IMR-90 (cell line): ENCODE measurements at regions of chr5 and their contacts with region 1.

Region 1: DNA sequence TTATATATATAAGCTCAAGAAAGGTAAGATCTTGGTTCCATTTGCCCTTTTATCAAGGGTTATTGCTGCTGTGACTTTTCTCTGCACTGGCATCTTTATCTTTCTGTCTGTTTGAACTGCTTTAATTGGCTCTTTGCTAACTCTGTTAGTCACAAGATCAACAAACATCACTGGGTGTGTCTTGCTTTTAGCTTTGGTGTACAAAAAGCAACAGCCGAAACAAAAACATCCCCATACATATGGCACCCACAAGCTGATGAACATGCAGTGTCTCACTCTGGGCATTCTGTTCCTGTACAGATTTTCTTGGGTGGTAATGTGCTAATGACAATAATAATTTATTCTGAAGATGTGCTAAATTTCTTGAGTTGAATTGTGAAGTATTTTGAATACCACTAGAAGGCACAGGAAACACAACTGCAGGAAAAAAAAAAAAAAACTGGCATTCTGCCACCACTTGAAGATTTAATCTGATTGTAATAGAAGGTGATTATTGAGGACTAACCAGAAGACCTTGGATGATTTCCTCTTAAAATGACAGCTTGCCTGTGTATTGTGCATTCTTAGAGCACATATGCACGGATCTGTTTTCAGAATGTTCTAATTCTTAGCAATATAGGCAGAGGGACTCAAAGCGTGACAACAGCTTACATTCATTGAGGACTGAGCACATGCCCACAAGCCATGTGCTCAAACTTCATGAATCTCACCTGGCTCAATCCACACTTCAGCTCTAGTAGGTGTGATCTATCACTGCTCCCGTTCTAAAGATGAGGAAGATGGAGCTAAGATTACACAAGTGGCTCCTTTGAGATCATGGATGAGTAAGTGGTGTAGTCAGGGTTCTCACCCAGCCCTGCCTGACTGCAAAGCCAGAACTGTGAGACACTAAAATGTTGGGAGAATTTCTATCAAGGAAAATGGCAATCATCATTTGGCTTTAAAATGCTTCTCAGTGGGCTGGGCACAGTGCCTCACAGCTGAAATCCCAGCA is 96.4 kb downstream of the EBF1 start:
- DNase-seq: peak; percentile 37
- ATAC-seq: no peak
- H3K4me3 ChIP-seq: no peak overlapping the region
- H3K27ac ChIP-seq: no peak overlapping the region
- H3K4me1 ChIP-seq: no peaks in the 10 kb centered on the region
- H3K27me3 ChIP-seq: no peaks in the 10 kb centered on the region
- CTCF ChIP-seq: no peak
- POLR2A ChIP-seq: no peak
- RAD21 ChIP-seq: no peak

Region 2: DNA sequence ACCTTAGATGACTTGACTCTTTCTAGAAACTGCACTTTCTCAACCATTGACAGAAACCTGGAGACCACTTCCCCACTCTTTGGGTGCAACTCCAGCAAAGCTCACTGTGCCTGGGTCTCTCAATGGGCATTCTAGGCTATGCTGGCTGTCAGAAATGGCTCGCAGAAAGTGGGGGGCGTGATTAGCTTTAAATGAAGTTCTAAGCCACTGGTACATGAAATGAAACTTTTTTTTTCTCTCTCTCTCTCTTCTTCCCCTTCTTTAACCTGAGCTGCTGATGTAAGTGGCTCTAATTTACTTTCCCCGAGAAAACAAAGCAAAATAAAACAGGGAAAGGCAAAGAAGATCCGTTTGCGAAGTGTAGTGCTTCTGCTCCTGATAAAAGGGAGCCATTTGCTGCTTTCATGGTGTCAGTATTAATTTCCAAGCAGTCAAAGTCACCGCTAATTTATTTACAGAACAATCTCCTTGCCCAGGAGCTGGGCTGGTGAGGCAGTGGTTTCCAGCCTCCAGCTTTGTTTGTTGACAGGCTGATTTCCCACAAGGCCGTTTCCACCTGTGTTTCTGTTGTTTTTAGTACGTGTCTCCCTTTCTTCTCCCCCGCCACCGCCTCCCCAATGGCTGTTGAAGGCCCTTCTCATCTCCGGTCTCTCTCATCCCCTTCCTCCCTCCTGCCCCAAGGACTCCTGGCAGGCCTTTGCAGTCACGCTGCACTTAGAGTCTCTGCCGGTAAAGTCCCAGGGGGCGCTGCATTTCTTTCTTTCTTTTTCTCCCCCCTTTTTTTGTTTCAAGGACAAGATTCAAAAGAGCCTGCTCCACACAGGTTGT is 326.5 kb before region 1 on chr5:
- CTCF ChIA-PET with region 1: no interaction called
- POLR2A ChIA-PET with region 1: no interaction called
- dilution Hi-C with region 1: no loop called
- in situ Hi-C with region 1: no loop called
- intact Hi-C with region 1: no loop called
- DNase-seq: no peak
- ATAC-seq: no peak
- H3K4me3 ChIP-seq: no peak overlapping the region
- H3K27ac ChIP-seq: no peak overlapping the region
- H3K4me1 ChIP-seq: no peaks in the 10 kb centered on the region
- H3K27me3 ChIP-seq: no peaks in the 10 kb centered on the region
- CTCF ChIP-seq: no peak
- POLR2A ChIP-seq: no peak
- RAD21 ChIP-seq: no peak

Region 3: DNA sequence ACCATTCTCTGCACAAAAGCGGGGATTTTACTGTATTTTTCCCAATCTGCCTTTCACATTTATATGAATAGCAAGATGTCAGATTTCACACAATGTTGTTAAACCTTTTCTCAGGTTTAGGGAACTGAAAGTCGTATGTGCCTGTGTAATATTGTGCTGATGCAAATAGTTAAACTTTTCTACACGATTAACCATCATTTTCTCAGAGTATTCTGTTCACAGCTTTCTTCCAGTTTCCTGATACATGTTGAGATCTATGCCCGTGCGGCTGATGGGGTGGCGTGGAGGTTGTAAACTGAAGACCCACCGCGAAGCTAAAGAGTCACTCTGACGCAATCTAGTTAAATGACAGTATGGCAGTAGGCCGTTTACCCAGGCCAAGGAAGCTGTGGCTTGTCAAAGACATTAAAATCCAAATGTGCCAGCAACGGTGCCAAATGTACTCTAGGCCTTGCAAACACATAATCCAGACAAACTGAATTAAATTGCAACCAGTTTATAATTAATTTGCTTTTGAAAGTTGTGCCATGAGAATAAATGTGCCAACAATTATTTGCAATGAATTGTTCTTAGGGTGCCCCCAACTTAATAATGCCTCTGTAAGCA is 49.3 kb before region 1 on chr5:
- CTCF ChIA-PET with region 1: no interaction called
- POLR2A ChIA-PET with region 1: no interaction called
- dilution Hi-C with region 1: no loop called
- in situ Hi-C with region 1: no loop called
- intact Hi-C with region 1: no loop called
- DNase-seq: no peak
- ATAC-seq: no peak
- H3K4me3 ChIP-seq: no peak overlapping the region
- H3K27ac ChIP-seq: no peak overlapping the region
- H3K4me1 ChIP-seq: peaks cover 2% of the 10 kb centered on the region; the same call in 1 of the 2 replicates
- H3K27me3 ChIP-seq: no peaks in the 10 kb centered on the region; the same call in 1 of the 2 replicates
- CTCF ChIP-seq: no peak
- POLR2A ChIP-seq: no peak
- RAD21 ChIP-seq: no peak

Region 4: GRCh38 chr5:158992037-158992740 is 11.1 kb before region 1 on chr5:
- CTCF ChIA-PET with region 1: no interaction called
- POLR2A ChIA-PET with region 1: interaction called, 14 read pairs
- dilution Hi-C with region 1: no loop called
- in situ Hi-C with region 1: no loop called
- intact Hi-C with region 1: no loop called
- DNase-seq: no peak
- ATAC-seq: no peak
- H3K4me3 ChIP-seq: no peak overlapping the region
- H3K27ac ChIP-seq: no peak overlapping the region
- H3K4me1 ChIP-seq: no peaks in the 10 kb centered on the region
- H3K27me3 ChIP-seq: peaks cover 3% of the 10 kb centered on the region; the same call in 1 of the 2 replicates
- CTCF ChIP-seq: no peak
- POLR2A ChIP-seq: no peak
- RAD21 ChIP-seq: no peak